GM10248 (cell line): ENCODE measurements at regions of chr5 and their contacts with region 1.

Region 1: DNA sequence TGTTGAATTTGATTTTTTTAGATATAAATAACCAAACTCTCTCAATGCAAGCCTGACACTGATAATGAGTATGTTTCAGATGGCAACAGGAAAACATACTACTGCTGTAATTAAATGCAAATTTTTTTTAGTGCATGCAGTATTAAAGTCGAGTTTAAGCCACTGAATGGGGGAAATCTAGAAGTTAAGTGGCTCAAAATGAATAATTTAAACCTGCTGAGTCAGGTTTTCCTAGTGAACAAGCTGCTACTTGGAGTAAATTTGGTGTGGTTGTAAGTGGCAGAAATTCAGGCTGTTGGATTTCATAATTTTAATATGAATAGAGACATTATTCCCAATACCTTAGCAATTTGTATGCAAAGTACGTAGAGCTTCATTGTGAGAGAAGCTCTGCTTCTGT is 121.8 kb downstream of the SLF1 start:
- DNase-seq: no peak
- CTCF ChIP-seq: no peak

Region 2: DNA sequence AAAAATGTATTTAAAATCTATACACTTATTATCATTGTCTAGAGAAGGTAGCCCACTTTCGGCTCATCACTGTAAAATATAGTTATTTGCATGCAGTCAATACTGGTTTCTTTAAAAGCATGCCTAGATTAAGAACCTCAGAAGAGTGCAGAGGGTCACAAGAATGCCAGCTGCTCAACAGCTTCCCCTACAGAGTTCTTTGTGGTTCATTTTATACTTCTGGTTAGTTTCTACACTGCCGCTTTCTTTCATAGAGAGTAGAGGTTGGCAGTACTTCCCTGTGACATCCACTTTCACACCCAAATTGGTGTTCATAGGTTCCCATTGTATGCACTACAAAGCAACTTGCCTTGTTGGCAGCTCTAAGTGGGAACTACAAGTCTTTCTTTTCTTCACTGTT is 259.2 kb before region 1 on chr5:
- CTCF ChIA-PET with region 1: no interaction called
- POLR2A ChIA-PET with region 1: no interaction called
- DNase-seq: no peak
- CTCF ChIP-seq: no peak

Region 3: GRCh38 chr5:94524841-94525697 is 215.2 kb before region 1 on chr5:
- CTCF ChIA-PET with region 1: interaction called, 39 read pairs
- POLR2A ChIA-PET with region 1: no interaction called
- DNase-seq: peak; percentile 30
- CTCF ChIP-seq: peak; percentile 71

Region 4: GRCh38 chr5:94702729-94703128 is 37.6 kb before region 1 on chr5:
- CTCF ChIA-PET with region 1: interaction called, 12 read pairs
- POLR2A ChIA-PET with region 1: no interaction called
- DNase-seq: no peak
- CTCF ChIP-seq: no peak

Region 5: DNA sequence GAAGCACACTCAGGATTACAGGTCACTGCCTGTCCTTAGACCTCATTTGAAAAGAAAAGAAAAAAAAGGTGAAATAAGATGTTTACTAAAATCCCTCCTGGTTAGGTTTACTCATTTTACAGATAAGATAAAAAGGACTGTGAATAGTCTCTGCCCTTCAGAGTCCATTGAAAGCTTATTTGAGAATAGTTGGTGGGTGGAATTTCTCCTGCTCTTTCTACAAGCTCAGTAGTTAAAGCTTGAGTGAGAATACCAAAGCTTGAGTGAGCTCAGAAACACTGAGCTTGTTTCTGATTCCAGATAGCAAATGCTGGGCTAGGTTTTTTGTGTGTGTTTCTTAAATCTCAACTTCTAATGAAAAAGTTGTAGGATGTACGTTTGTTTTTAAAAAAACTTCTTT is 15.1 kb before region 1 on chr5:
- CTCF ChIA-PET with region 1: interaction called, 38 read pairs
- POLR2A ChIA-PET with region 1: no interaction called
- DNase-seq: no peak
- CTCF ChIP-seq: no peak

Region 6: GRCh38 chr5:94751460-94751859 is 11.2 kb after region 1 on chr5:
- CTCF ChIA-PET with region 1: interaction called, 19 read pairs
- POLR2A ChIA-PET with region 1: no interaction called
- DNase-seq: no peak
- CTCF ChIP-seq: no peak

Region 7: GRCh38 chr5:94761786-94762185 is 21.5 kb after region 1 on chr5:
- CTCF ChIA-PET with region 1: interaction called, 17 read pairs
- POLR2A ChIA-PET with region 1: no interaction called
- DNase-seq: no peak
- CTCF ChIP-seq: no peak

Region 8: GRCh38 chr5:94849821-94850736 is 109.8 kb after region 1 on chr5:
- CTCF ChIA-PET with region 1: interaction called, 12 read pairs
- POLR2A ChIA-PET with region 1: no interaction called
- DNase-seq: peak; percentile 29
- CTCF ChIP-seq: peak; percentile 74

Region 9: GRCh38 chr5:95057615-95058014 is 317.3 kb after region 1 on chr5:
- CTCF ChIA-PET with region 1: no interaction called
- POLR2A ChIA-PET with region 1: no interaction called
- DNase-seq: no peak
- CTCF ChIP-seq: no peak